ENCODE measurements at regions of chr11 and their contacts with region 1.

Region 1: DNA sequence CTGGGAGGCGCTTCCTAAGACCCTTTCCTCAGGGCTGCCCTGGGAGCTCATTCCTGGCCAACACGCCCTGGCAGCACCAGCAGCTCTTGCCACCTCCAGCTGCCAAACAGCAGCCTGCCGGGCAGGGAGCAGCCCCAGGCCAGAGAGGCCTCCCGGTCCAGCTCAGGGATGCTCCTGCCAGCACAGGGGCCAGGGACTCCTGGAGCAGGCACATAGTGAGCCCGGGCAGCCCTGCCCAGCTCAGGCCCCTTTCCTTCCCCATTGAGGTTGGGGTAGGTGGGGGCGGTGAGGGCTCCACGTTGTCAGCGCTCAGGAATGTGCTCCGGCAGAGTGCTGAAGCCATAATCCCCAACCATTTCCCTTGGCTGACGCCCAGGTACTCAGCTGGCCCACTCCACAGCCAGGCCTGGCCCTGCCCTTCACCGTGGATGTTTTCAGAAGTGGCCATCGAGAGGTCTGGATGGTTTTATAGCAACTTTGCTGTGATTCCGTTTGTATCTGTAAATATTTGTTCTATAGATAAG is 7.6 kb downstream of the SLC39A13 start:
- DNase-seq: peak in 1 of 4 experiments; percentile 26
- ATAC-seq: peak; percentile 25
- H3K4me3 ChIP-seq: no peak overlapping the region
- H3K27ac ChIP-seq: no peak overlapping the region
- H3K4me1 ChIP-seq: peaks cover 0 to 53% of the 10 kb centered on the region in 2 experiments; a peak in 2 of 5 replicates
- H3K27me3 ChIP-seq: no peaks in the 10 kb centered on the region
- CTCF ChIP-seq: no peak
- EP300 ChIP-seq: no peak
- POLR2A ChIP-seq: peak; percentile 53
- RAD21 ChIP-seq: no peak

Region 2: GRCh38 chr11:47269829-47270305 is 146.1 kb before region 1 on chr11 and contains the start of gene MADD:
- CTCF ChIA-PET with region 1: no interaction called
- POLR2A ChIA-PET with region 1: no interaction called
- in situ Hi-C with region 1: no loop called
- intact Hi-C with region 1: no loop called
- DNase-seq: peak; percentile 93 to 97 (median 96)
- ATAC-seq: peak; percentile 89
- H3K4me3 ChIP-seq: peak within 1 kb of the TSS; percentile 85
- H3K27ac ChIP-seq: peak within 1 kb of the TSS; percentile 91
- H3K4me1 ChIP-seq: peaks cover 51 to 56% of the 10 kb centered on the region in 2 experiments
- H3K27me3 ChIP-seq: no peaks in the 10 kb centered on the region
- CTCF ChIP-seq: peak in 2 of 3 experiments; percentile 20 to 26; a peak in 3 of 6 replicates
- EP300 ChIP-seq: no peak
- POLR2A ChIP-seq: peak; percentile 78
- RAD21 ChIP-seq: peak in 1 of 2 experiments; percentile 22; a peak in 1 of 4 replicates
- polyA plus RNA-seq, gene MADD: 0.68 to 3.2 TPM

Region 3: GRCh38 chr11:47361419-47361818 is 54.6 kb before region 1 on chr11:
- CTCF ChIA-PET with region 1: no interaction called
- POLR2A ChIA-PET with region 1: no interaction called
- in situ Hi-C with region 1: no loop called
- intact Hi-C with region 1: no loop called
- DNase-seq: no peak
- ATAC-seq: peak; percentile 68
- H3K4me3 ChIP-seq: no peak overlapping the region
- H3K27ac ChIP-seq: peak overlapping the region; percentile 10; the same call in 1 of the 3 replicates
- H3K4me1 ChIP-seq: peaks cover 6 to 26% of the 10 kb centered on the region in 2 experiments; a peak in 4 of 5 replicates
- H3K27me3 ChIP-seq: no peaks in the 10 kb centered on the region
- CTCF ChIP-seq: no peak; a peak in 1 of 6 replicates
- EP300 ChIP-seq: no peak
- POLR2A ChIP-seq: no peak
- RAD21 ChIP-seq: no peak

Region 4: DNA sequence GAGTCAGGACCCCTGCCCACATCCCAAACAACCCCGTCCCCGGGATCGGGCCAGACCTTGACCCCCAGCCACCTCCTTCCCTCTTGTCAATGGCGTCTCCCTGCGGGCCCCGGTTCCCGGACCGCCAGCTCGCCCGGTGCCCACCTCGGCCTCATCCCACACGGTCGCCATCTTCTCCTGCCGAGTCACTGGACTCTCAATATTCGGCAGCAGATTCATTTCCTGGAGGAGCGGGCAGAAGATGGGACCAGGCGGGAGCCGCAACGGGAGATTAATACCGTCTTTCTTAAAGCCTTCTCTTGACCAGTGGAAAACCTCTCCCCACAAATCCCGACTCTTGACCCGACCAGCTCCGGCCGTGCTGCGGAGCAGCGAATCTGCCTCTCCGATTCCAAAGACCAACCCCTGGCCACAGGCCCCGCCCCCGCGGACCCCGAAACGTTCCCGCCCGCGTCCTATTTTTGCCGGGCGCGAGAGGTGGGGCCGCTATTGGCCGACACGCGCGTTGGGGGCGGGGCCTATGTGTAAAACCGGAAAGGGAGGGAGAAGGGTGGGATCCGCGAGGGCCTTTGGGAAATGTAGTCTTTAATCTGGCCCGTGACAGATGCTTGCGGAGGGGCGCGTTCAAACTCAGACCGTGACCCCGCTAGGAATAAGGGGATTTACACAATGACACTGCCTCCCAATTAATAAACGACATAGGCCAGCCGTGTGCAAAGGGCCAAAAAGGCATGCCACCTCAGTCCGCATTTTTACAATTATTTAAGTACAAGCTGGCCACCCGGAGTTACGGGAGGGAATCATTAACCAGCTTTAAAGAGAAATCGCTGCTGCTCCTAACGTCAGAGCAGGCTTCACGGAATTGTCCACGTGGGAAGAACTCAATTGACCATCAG is 10.3 kb after region 1 on chr11 and contains the start of gene PSMC3:
- CTCF ChIA-PET with region 1: no interaction called
- POLR2A ChIA-PET with region 1: interaction called, 23 read pairs
- in situ Hi-C with region 1: no loop called
- intact Hi-C with region 1: no loop called
- DNase-seq: peak; percentile 95 to 98 (median 96)
- ATAC-seq: peak; percentile 98
- H3K4me3 ChIP-seq: peak within 1 kb of the TSS; percentile 88
- H3K27ac ChIP-seq: peak within 1 kb of the TSS; percentile 97
- H3K4me1 ChIP-seq: peaks cover 9 to 19% of the 10 kb centered on the region in 2 experiments; a peak in 4 of 5 replicates
- H3K27me3 ChIP-seq: no peaks in the 10 kb centered on the region
- CTCF ChIP-seq: 0 out of 6 replicates have a peak, but pooled peaks of 1 of the 3 experiments have one; percentile 6
- EP300 ChIP-seq: peak; percentile 99
- POLR2A ChIP-seq: peak; percentile 96
- RAD21 ChIP-seq: 0 out of 4 replicates have a peak, but pooled peaks of 1 of the 2 experiments have one; percentile 13
- polyA plus RNA-seq, gene PSMC3: 44.3 to 98.5 TPM